ENCODE measurements at regions of chr11 and their contacts with region 1.

Region 1: GRCh38 chr11:45872513-45873356 is 12.7 kb upstream of the MAPK8IP1 start:
- DNase-seq: peak; percentile 64
- H3K4me3 ChIP-seq: no peak overlapping the region
- H3K27ac ChIP-seq: no peak overlapping the region
- H3K4me1 ChIP-seq: peaks cover 6% of the 10 kb centered on the region
- H3K27me3 ChIP-seq: no peaks in the 10 kb centered on the region
- CTCF ChIP-seq: peak; percentile 76 to 78

Region 2: DNA sequence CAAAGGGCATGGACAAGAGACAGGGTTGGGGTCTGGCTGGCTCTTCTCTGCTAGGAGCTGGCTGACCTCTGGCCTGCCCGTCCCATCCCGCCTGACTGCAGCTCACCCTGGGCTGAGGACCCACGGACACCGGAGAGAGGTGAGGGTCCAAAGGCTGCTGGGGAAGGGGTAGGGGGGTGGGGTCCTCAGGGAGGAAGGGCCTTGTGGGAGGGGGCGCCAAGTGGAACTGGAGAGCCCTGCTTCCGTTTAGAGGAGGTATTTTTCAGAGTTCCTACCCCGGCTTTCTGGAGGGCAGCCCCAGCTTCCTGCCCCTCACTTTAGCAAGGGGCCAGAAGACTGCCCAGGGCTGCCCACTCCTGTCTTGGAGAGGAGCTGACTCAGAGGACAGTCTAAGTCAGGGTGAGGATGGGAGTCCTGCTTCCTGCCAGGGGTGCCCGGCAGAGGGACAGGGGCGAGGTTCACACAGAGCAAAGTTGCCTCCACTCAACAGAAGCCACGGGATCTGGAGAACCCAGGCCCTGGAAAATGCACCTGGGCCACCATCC is 56.8 kb after region 1 on chr11:
- CTCF ChIA-PET with region 1: no interaction called
- dilution Hi-C with region 1: loop called (anchors 5 kb)
- in situ Hi-C with region 1: no loop called
- intact Hi-C with region 1: no loop called
- DNase-seq: peak; percentile 38
- H3K4me3 ChIP-seq: no peak overlapping the region
- H3K27ac ChIP-seq: peak overlapping the region; percentile 18
- H3K4me1 ChIP-seq: peaks cover 67% of the 10 kb centered on the region
- H3K27me3 ChIP-seq: no peaks in the 10 kb centered on the region
- CTCF ChIP-seq: peak in 1 of 2 donors; percentile 4

Region 3: GRCh38 chr11:46006418-46007070 is 133.8 kb after region 1 on chr11:
- CTCF ChIA-PET with region 1: no interaction called
- dilution Hi-C with region 1: no loop called
- in situ Hi-C with region 1: no loop called
- intact Hi-C with region 1: loop called (anchors 1 kb)
- DNase-seq: peak; percentile 57
- H3K4me3 ChIP-seq: no peak overlapping the region
- H3K27ac ChIP-seq: no peak overlapping the region
- H3K4me1 ChIP-seq: no peaks in the 10 kb centered on the region
- H3K27me3 ChIP-seq: no peaks in the 10 kb centered on the region
- CTCF ChIP-seq: peak; percentile 72 to 80

Measured in mammary epithelial cell (primary cell).